Activated naive CD4-positive, alpha-beta T cell treated with anti-CD3 and anti-CD28 coated beads, Interleukin-2, amount 10 ng/mL, durations not matched to agents 7 days and 5 days (primary cell): ENCODE measurements at regions of chr2 and their contacts with region 1.

Region 1: DNA sequence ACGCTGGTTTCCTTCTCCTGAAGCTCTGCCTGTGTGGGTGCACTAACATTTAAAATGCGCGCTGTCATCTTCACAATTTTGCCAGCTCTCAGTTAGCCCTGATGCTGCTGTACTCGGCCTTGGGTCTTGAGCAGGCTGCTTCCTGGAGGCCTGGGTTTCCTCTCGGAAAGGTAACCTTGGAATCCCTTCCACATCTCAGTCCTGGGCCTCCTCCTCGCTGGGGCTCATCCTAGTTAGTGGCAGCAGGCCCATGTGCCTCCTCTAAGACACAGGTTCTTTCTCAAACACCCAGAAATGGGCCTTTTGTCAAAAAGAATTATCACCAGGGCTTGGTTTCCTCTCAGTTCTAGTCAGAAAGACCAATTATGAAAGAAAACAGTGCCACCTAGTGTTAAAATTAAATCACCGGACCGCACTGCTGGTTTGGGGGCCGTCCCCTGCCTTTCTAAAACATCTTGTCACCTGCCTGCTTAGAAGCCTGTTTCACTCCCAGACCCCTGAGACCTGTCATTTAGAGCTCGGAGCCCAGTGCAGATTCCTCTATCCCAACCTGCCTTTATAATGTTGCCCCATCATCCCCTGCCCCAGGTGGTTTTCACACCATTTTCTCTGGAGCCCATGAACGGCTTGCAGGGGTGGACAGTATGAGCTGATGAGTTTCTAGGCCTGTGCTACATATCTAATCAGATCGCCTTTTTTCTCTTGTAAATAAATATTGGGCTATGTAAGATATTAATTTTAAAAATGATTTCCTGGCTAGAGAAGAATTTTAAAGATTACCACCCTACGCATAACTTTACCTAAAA is 42.4 kb downstream of the HK2 start:
- DNase-seq: peak; percentile 60
- H3K4me3 Mint-ChIP-seq: no peak overlapping the region
- H3K27ac Mint-ChIP-seq: peak overlapping the region; percentile 50
- H3K4me1 Mint-ChIP-seq: peaks cover 3% of the 10 kb centered on the region
- H3K27me3 Mint-ChIP-seq: no peaks in the 10 kb centered on the region

Region 2: GRCh38 chr2:74529357-74530238 is 346.7 kb before region 1 on chr2 and contains the starts of genes AUP1 and HTRA2:
- CTCF ChIA-PET with region 1: no interaction called
- DNase-seq: peak; percentile 94
- H3K4me3 Mint-ChIP-seq: peak within 1 kb of the TSS; percentile 96
- H3K27ac Mint-ChIP-seq: peak within 1 kb of the TSS; percentile 94
- H3K4me1 Mint-ChIP-seq: peaks cover 51% of the 10 kb centered on the region
- H3K27me3 Mint-ChIP-seq: no peaks in the 10 kb centered on the region

Region 3: DNA sequence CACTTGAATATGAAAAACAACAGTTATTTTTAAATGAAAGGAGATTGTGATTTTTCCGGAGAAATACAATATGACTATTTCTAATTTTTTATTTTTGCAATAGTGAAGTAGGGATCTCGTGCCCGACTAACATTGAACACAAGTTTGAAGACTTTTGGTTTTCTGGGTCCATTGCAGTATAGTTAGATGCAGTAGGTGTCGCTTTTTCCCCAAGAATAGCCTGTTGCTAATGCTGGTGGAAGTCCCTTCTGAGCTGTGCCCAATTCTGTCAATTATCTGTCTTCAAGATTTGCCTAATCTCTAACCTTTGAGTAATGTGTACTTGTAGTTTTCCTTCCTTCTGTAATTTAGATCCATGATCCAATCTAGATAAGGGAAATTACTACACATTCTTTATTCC is 185.7 kb before region 1 on chr2:
- CTCF ChIA-PET with region 1: interaction called, 13 read pairs
- DNase-seq: peak; percentile 44
- H3K4me3 Mint-ChIP-seq: no peak overlapping the region
- H3K27ac Mint-ChIP-seq: no peak overlapping the region
- H3K4me1 Mint-ChIP-seq: no peaks in the 10 kb centered on the region
- H3K27me3 Mint-ChIP-seq: peaks cover 12% of the 10 kb centered on the region

Region 4: GRCh38 chr2:74715078-74715791 is 161.0 kb before region 1 on chr2:
- CTCF ChIA-PET with region 1: interaction called, 90 read pairs
- DNase-seq: peak; percentile 83
- H3K4me3 Mint-ChIP-seq: peak overlapping the region; percentile 71
- H3K27ac Mint-ChIP-seq: no peak overlapping the region
- H3K4me1 Mint-ChIP-seq: peaks cover 7% of the 10 kb centered on the region
- H3K27me3 Mint-ChIP-seq: peaks cover 18% of the 10 kb centered on the region

Region 5: GRCh38 chr2:74833418-74834233 is 42.7 kb before region 1 on chr2 and contains the start of gene HK2:
- CTCF ChIA-PET with region 1: interaction called, 49 read pairs
- DNase-seq: peak; percentile 88
- H3K4me3 Mint-ChIP-seq: peak within 1 kb of the TSS; percentile 95
- H3K27ac Mint-ChIP-seq: peak within 1 kb of the TSS; percentile 94
- H3K4me1 Mint-ChIP-seq: peaks cover 53% of the 10 kb centered on the region
- H3K27me3 Mint-ChIP-seq: peaks cover 4% of the 10 kb centered on the region

Region 6: GRCh38 chr2:74864846-74865722 is 11.2 kb before region 1 on chr2:
- CTCF ChIA-PET with region 1: no interaction called
- DNase-seq: peak; percentile 15
- H3K4me3 Mint-ChIP-seq: no peak overlapping the region
- H3K27ac Mint-ChIP-seq: peak overlapping the region; percentile 11
- H3K4me1 Mint-ChIP-seq: peaks cover 46% of the 10 kb centered on the region
- H3K27me3 Mint-ChIP-seq: no peaks in the 10 kb centered on the region